ENCODE measurements at regions of chr5 and their contacts with region 1.

Region 1: GRCh38 chr5:175657593-175658271 is at the start of gene HRH2:
- DNase-seq: peak; percentile 74
- H3K4me3 Mint-ChIP-seq: peak within 1 kb of the TSS; percentile 90
- H3K27ac Mint-ChIP-seq: peak within 1 kb of the TSS; percentile 72
- H3K4me1 Mint-ChIP-seq: peaks cover 79% of the 10 kb centered on the region
- H3K27me3 Mint-ChIP-seq: no peaks in the 10 kb centered on the region
- total RNA-seq, gene HRH2: 8.7 to 10.0 TPM

Region 2: GRCh38 chr5:175617447-175617846 is 40.3 kb before region 1 on chr5:
- CTCF ChIA-PET with region 1: no interaction called
- intact Hi-C with region 1: loop called (anchors 5 kb)
- DNase-seq: peak; percentile 9
- H3K4me3 Mint-ChIP-seq: no peak overlapping the region
- H3K27ac Mint-ChIP-seq: no peak overlapping the region
- H3K4me1 Mint-ChIP-seq: peaks cover 15% of the 10 kb centered on the region
- H3K27me3 Mint-ChIP-seq: no peaks in the 10 kb centered on the region

Region 3: DNA sequence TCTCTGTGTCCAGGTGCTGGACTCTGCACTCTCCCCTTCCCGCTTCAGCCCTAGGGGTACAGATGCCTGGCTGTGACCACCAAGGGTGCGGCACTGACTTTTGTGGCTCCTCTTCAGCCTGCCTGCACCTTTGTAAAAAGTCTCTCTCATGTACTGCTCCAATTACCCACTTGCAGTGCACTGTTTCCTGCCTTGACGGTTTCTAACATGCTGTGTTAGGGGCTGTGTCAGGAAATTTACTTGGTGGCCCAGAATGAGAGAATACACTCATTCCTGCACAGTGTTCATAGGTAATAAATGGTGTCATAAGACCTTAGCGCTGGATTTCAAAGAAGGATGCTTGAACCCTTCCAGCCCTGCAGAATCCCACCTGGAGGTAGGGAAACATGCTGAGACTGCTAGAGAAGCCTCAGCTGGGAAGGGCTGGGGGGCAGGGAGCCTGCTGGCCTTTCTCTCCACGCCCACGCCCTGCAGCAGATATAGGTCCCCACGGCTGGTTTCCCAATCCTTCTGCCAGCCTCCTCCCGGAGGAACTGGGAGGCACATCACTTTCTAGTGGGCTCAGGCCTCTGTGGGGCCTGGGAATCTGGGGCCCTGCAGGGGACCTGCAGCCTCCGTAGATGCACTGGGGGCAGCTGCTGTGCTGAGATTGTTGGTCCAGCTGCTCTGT is 17.5 kb before region 1 on chr5:
- CTCF ChIA-PET with region 1: interaction called, 3 read pairs
- intact Hi-C with region 1: loop called (anchors 2 kb)
- DNase-seq: no peak
- H3K4me3 Mint-ChIP-seq: no peak overlapping the region
- H3K27ac Mint-ChIP-seq: peak overlapping the region; percentile 56
- H3K4me1 Mint-ChIP-seq: peaks cover 26% of the 10 kb centered on the region
- H3K27me3 Mint-ChIP-seq: no peaks in the 10 kb centered on the region

Region 4: GRCh38 chr5:175709276-175709781 is 51.6 kb after region 1 on chr5:
- CTCF ChIA-PET with region 1: no interaction called
- intact Hi-C with region 1: no loop called
- DNase-seq: no peak
- H3K4me3 Mint-ChIP-seq: no peak overlapping the region
- H3K27ac Mint-ChIP-seq: no peak overlapping the region
- H3K4me1 Mint-ChIP-seq: no peaks in the 10 kb centered on the region
- H3K27me3 Mint-ChIP-seq: no peaks in the 10 kb centered on the region

Measured in activated naive CD4-positive, alpha-beta T cell treated with anti-CD3 and anti-CD28 coated beads for 36 hours (primary cell).